A549 (cell line): ENCODE measurements at regions of chr6 and their contacts with region 1.

Region 1: GRCh38 chr6:57316581-57317059 is 810 bp upstream of the PRIM2 start:
- DNase-seq: peak; percentile 71 to 90
- ATAC-seq: peak; percentile 82 to 91
- H3K4me3 ChIP-seq: peak overlapping the region; percentile 66
- H3K27ac ChIP-seq: peak overlapping the region; percentile 80 to 86
- H3K4me1 ChIP-seq: peaks cover 35% of the 10 kb centered on the region
- CTCF ChIP-seq: peak; percentile 83
- EP300 ChIP-seq: no peak
- POLR2A ChIP-seq: 0 out of 2 replicates have a peak, but pooled peaks have one; percentile 18
- RAD21 ChIP-seq: peak; percentile 92 to 95

Region 2: GRCh38 chr6:56902641-56903464 is 413.8 kb before region 1 on chr6:
- CTCF ChIA-PET with region 1: interaction called, 33 read pairs
- POLR2A ChIA-PET with region 1: no interaction called
- DNase-seq: peak in 1 of 2 experiments; percentile 15
- ATAC-seq: peak in 1 of 2 experiments; percentile 47; a peak in 2 of 6 replicates
- H3K4me3 ChIP-seq: no peak overlapping the region
- H3K27ac ChIP-seq: peak overlapping the region; percentile 35 to 68; a peak in 3 of 6 replicates
- H3K4me1 ChIP-seq: peaks cover 43% of the 10 kb centered on the region
- CTCF ChIP-seq: peak; percentile 71
- EP300 ChIP-seq: no peak
- POLR2A ChIP-seq: no peak
- RAD21 ChIP-seq: peak; percentile 61 to 62

Region 3: GRCh38 chr6:57172136-57173055 is 144.2 kb before region 1 on chr6 and contains the start of gene BAG2:
- CTCF ChIA-PET with region 1: interaction called, 6 read pairs
- POLR2A ChIA-PET with region 1: interaction called, 14 read pairs
- DNase-seq: peak; percentile 61 to 85
- ATAC-seq: peak; percentile 93 to 94
- H3K4me3 ChIP-seq: peak within 1 kb of the TSS; percentile 55
- H3K27ac ChIP-seq: peak within 1 kb of the TSS; percentile 92 to 99
- H3K4me1 ChIP-seq: peaks cover 30% of the 10 kb centered on the region
- CTCF ChIP-seq: no peak
- EP300 ChIP-seq: no peak
- POLR2A ChIP-seq: peak; percentile 81
- RAD21 ChIP-seq: no peak
- polyA plus RNA-seq, gene BAG2: 10.2 and 13.9 TPM in 2 replicates

Region 4: DNA sequence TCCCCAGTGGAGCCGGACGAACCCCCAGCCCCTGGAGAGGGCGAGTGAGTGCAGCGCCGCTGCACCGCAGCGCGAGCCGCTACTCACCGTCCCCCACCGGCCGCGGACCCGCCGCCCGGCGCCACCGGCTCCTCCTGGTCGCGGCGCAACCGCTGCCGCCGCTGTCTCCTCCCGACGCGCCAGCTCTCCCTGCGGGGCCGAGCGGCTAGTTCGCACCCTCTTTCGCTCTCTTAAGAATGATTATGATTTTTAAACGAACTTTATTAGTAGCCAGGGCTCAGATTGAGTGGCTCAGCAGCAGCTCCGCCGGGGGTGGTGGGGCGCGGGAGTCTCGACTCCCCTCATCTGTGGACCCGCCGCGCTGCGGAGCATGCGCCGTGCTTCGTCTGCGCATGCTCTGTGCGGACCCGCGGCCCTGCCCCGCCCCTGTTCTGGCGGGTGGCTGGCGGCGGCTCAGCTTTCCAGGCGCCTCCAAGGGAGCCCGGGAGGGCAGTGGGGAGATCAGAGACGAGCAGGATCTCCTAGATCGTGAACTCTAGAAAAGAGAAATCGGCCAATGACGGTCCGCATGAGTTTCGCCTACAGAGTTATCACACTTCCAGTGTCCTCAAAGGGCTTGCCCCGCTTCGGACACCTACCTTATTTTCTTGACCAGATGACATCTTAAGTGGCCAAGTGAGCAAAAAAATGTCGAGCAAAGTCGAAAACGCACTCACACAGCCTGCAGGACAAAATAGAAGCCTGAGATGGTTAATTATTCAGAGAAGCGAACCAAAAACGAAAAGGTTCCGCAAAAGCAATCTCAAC is 94.5 kb before region 1 on chr6 and contains the start of gene RAB23:
- CTCF ChIA-PET with region 1: interaction called, 13 read pairs
- POLR2A ChIA-PET with region 1: interaction called, 10 read pairs
- DNase-seq: peak; percentile 57 to 77
- ATAC-seq: peak; percentile 87 to 95
- H3K4me3 ChIP-seq: peak within 1 kb of the TSS; percentile 100
- H3K27ac ChIP-seq: peak within 1 kb of the TSS; percentile 95 to 98
- H3K4me1 ChIP-seq: no peaks in the 10 kb centered on the region
- CTCF ChIP-seq: no peak
- EP300 ChIP-seq: no peak
- POLR2A ChIP-seq: peak; percentile 82
- RAD21 ChIP-seq: no peak; a peak in 1 of 5 replicates
- polyA plus RNA-seq, gene RAB23: 16.3 and 21.5 TPM in 2 replicates

Region 5: DNA sequence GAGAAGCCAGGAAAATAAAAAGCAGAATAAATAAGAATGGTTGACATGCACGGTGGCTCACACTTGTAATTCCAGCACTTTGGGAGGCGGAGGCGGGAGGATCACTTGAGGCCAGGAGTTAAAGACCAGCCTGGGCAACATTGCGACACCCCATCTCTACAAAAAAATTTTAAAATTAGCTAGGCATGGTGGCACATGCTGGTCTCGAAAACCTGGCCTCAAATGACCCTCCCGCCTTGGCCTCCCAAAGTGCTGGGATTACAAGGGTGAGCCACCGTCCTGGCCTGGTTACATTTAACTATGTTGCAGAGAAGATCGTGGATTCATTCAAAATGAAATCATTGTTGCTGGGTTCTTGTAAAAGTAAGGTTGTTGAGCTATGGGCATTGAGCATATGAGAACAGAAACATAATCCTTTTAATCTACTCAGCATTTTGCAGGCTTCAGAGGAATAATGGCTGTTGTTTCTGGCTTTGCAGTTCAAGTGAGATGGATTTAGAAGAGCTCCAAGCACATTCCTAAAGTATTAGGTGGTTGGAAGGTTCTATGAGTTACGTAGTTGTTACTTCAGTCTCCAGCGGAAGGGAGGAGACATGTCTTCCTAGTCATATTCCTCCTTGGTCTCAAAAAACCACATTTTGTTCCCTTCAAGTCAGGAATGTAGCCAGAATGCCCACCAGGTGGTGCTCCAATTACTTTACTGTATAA is 48.9 kb before region 1 on chr6:
- CTCF ChIA-PET with region 1: interaction called, 24 read pairs
- POLR2A ChIA-PET with region 1: interaction called, 5 read pairs
- DNase-seq: peak; percentile 28 to 83
- ATAC-seq: peak; percentile 93 to 95
- H3K4me3 ChIP-seq: no peak overlapping the region
- H3K27ac ChIP-seq: peak overlapping the region; percentile 53 to 60; a peak in 4 of 6 replicates
- H3K4me1 ChIP-seq: peaks cover 4% of the 10 kb centered on the region; the same call in 1 of the 3 replicates
- CTCF ChIP-seq: peak; percentile 54; the same call in 2 of the 3 replicates
- EP300 ChIP-seq: no peak
- POLR2A ChIP-seq: no peak
- RAD21 ChIP-seq: peak; percentile 54 to 57